Dendritic cell treated with granulocyte-macrophage colony-stimulating factor and Interleukin-4, amounts not matched to agents 40 ng/mL and 50 ng/mL, for 4 days (primary cell): ENCODE measurements at regions of chr4 and their contacts with region 1.

Region 1: GRCh38 chr4:15956179-15956850 is 6.7 kb downstream of the FGFBP2 start:
- H3K4me3 Mint-ChIP-seq: no peak overlapping the region
- H3K27ac Mint-ChIP-seq: no peak overlapping the region
- H3K4me1 Mint-ChIP-seq: no peaks in the 10 kb centered on the region
- H3K27me3 Mint-ChIP-seq: no peaks in the 10 kb centered on the region

Region 2: GRCh38 chr4:15286041-15286440 is 670.3 kb before region 1 on chr4:
- intact Hi-C with region 1: no loop called
- H3K4me3 Mint-ChIP-seq: no peak overlapping the region
- H3K27ac Mint-ChIP-seq: no peak overlapping the region
- H3K4me1 Mint-ChIP-seq: no peaks in the 10 kb centered on the region
- H3K27me3 Mint-ChIP-seq: no peaks in the 10 kb centered on the region

Region 3: DNA sequence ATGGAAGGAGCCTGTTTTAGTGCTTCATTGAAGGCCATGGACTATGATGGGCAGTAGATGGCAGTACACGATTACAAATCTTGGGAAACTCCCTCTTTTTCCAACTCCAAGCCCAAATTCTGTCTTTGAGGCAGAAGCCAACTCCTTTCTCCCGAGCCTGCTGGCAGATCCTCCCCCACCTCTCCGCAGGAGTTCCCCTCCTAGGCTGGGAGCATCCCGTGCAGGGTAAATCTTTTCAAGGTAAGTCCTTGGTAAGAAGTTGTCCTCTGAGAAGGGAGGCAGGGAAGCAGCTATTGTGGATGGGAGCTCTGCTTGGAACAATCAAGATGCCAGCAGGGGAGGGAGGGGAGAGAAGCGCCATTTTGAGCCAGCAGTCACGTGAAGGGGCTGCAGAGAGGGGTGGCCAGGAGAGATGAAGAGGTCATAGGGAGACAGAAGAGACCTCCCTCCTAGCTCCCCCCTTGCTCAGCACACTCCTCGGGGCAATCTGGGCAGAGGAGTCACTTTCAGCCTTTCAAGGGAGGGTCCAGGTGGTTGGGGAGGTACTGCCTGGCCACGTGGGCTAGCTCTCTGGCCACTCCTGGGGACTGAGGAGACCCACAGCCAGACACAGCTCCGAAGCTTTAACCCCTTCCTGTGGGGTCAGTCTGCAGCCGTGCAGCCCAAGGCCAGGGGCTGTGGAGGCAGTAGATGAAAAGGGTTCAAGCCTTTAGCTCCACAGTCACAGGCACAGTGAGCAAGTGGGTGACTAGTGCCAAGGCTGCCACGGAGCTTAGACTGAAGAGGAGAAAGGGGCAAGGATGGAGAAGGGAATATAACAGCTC is 477.0 kb before region 1 on chr4:
- intact Hi-C with region 1: loop called (anchors 5 kb)
- H3K4me3 Mint-ChIP-seq: no peak overlapping the region
- H3K27ac Mint-ChIP-seq: no peak overlapping the region
- H3K4me1 Mint-ChIP-seq: peaks cover 3% of the 10 kb centered on the region
- H3K27me3 Mint-ChIP-seq: no peaks in the 10 kb centered on the region

Region 4: GRCh38 chr4:15665753-15666365 is 290.5 kb before region 1 on chr4:
- intact Hi-C with region 1: no loop called
- H3K4me3 Mint-ChIP-seq: no peak overlapping the region
- H3K27ac Mint-ChIP-seq: peak overlapping the region; percentile 88
- H3K4me1 Mint-ChIP-seq: peaks cover 30% of the 10 kb centered on the region
- H3K27me3 Mint-ChIP-seq: no peaks in the 10 kb centered on the region

Region 5: GRCh38 chr4:15729910-15730533 is 226.3 kb before region 1 on chr4:
- intact Hi-C with region 1: loop called (anchors 1 kb)
- H3K4me3 Mint-ChIP-seq: no peak overlapping the region
- H3K27ac Mint-ChIP-seq: no peak overlapping the region
- H3K4me1 Mint-ChIP-seq: peaks cover 5% of the 10 kb centered on the region
- H3K27me3 Mint-ChIP-seq: no peaks in the 10 kb centered on the region

Region 6: GRCh38 chr4:15805583-15806517 is 150.5 kb before region 1 on chr4:
- intact Hi-C with region 1: loop called (anchors 1 kb)
- H3K4me3 Mint-ChIP-seq: no peak overlapping the region
- H3K27ac Mint-ChIP-seq: peak overlapping the region; percentile 43
- H3K4me1 Mint-ChIP-seq: peaks cover 48% of the 10 kb centered on the region
- H3K27me3 Mint-ChIP-seq: no peaks in the 10 kb centered on the region

Region 7: DNA sequence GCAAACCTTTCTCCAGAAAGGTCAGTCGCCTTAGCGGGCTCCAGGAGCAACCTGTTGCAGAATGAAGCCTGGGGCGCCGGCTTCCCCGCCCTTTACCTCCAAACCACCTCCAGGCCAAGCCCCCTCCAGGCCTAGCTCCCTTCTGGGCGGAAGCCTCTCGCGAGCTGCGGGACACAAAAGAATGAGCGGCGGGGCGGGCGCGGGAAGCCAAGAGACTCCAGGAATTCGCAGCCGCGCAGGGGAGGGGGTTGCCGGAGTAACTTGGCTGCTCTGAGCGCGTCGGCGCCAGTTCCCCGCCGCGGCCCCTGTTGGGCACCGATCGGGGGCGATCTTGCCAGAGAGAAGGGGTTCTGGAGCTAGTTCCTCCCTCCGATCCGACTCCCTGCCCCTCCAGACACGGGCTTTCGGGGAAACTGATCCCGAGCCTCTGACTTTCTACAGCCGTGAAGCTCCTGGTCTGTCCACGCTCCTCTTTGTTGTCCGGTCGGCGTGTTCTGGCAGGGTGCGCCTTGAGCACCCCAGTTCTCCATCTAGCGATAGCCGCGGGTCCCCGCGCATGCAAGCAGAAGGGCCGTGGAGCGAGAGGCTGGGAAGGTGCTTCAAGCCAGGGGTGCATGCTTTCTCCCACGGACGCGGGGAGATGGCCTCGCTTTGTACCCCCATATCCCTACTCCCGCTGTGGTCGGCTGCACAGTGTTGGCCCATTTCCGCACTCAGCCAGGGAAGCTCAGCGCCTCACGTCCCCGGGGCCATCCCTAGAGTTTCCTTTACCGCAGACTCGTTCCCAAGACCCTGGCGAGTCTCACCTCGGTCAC is 126.3 kb after region 1 on chr4:
- intact Hi-C with region 1: no loop called
- H3K4me3 Mint-ChIP-seq: peak overlapping the region; percentile 74
- H3K27ac Mint-ChIP-seq: no peak overlapping the region
- H3K4me1 Mint-ChIP-seq: peaks cover 36% of the 10 kb centered on the region
- H3K27me3 Mint-ChIP-seq: peaks cover 55% of the 10 kb centered on the region

Region 8: DNA sequence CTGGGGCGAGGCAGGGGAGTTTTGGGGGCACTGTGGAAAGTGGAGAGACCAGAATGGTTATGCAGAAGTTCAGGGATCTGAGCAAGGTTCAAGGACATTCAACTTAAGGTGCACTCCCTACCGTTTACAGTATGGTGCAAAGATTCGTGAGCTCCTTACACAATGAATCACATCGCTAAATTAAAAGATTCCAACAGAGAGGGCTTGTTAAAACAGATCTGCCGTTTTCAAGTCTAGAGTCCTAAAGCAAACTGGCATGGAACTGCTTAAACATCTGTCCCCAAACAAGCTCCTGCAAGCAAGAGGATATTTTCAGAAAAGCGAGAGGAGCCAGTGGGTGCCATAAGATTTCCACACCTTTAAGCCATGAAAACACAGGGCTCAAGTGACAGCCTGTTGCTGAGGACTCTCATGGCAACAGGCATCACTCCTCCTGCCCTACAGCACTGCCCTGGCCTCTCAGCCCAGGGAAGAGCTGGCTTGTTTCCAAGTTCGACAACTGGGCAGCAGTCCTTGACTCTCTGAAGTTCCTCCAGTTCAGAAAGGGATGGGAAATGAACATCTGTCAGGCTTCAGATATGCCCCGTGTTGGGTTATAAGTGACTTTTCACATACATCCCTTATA is 1815.1 kb after region 1 on chr4:
- intact Hi-C with region 1: no loop called
- H3K4me3 Mint-ChIP-seq: no peak overlapping the region
- H3K27ac Mint-ChIP-seq: no peak overlapping the region
- H3K4me1 Mint-ChIP-seq: no peaks in the 10 kb centered on the region
- H3K27me3 Mint-ChIP-seq: no peaks in the 10 kb centered on the region